ENCODE measurements at regions of chr3 and their contacts with region 1.

Region 1: GRCh38 chr3:122392868-122393844 is 9.2 kb downstream of the FAM162A start:
- DNase-seq: peak; percentile 42
- ATAC-seq: no peak
- H3K4me3 Mint-ChIP-seq: no peak overlapping the region
- H3K27ac Mint-ChIP-seq: no peak overlapping the region
- H3K4me1 Mint-ChIP-seq: peaks cover 28% of the 10 kb centered on the region
- H3K27me3 Mint-ChIP-seq: no peaks in the 10 kb centered on the region

Region 2: GRCh38 chr3:122403489-122403888 is 10.3 kb after region 1 on chr3:
- CTCF ChIA-PET with region 1: interaction called, 23 read pairs
- POLR2A ChIA-PET with region 1: no interaction called
- DNase-seq: no peak
- ATAC-seq: no peak
- H3K4me3 Mint-ChIP-seq: no peak overlapping the region
- H3K27ac Mint-ChIP-seq: no peak overlapping the region
- H3K4me1 Mint-ChIP-seq: no peaks in the 10 kb centered on the region
- H3K27me3 Mint-ChIP-seq: no peaks in the 10 kb centered on the region

Region 3: DNA sequence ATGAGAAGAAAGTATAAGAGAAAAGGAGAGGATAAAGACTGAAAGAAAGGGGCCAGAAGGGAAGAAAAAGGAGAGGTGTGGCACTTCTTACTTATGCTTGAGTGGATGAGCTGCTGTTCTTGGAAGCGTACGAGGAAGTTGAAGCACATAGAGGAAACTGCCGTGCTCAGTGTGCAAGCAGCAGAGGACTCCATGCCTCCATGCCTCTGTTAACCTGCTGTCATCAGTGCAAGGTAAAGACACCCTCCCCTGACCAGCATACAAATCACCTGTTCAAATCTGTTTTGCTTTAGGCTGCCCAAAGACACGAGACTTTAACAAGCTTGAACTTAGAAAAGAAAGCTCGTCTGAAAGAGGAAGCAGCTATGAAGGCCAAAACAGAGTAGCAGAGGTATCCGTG is 16.3 kb after region 1 on chr3:
- CTCF ChIA-PET with region 1: interaction called, 23 read pairs
- POLR2A ChIA-PET with region 1: no interaction called
- DNase-seq: no peak
- ATAC-seq: no peak
- H3K4me3 Mint-ChIP-seq: no peak overlapping the region
- H3K27ac Mint-ChIP-seq: peak overlapping the region; percentile 17
- H3K4me1 Mint-ChIP-seq: peaks cover 24% of the 10 kb centered on the region
- H3K27me3 Mint-ChIP-seq: no peaks in the 10 kb centered on the region

Region 4: DNA sequence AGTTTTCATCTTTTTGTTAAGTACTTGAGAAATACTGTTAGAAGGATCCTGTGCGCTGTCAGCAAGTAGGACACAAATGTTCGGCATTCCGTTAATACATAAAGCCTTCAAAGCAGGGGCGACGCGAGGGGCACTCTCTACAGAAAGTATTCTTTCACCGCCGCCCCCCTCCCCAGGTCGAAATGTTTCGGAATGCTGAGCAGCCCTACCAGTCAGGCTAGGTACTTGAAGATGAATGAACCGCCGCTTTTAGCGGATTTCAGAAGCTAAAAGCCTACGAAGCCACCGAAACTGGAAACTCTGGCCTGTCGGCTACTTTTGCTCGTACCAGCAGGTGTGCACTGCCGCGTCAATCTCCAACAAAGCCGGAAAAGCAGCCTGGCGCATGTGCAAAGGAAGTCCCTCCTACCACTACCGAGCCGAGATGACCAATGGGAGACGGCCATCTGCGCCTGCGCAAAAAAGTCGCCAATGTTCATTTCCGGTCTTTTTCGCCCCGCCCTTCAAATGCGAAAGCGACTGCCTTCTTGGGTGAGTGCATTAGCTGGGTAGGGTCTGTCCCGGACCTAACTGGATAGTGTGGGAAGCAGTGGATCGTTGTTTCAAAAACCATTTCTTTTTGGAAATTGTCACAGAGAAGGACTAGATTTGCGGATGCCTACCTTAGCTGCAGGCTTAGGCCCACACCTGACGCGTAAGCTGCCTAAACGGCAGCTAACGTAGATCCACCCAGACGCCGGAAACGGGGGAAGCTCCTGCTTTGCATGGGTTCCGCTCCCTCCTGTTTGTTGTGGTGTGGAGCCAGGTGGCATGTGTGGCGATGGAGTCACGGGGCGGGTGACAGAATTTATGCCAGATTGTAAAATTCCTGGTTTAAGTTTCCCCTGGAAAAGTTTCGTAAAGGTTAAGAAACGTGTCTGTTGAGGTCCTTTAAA is 22.8 kb after region 1 on chr3 and contains the start of gene WDR5B:
- CTCF ChIA-PET with region 1: interaction called, 23 read pairs
- POLR2A ChIA-PET with region 1: interaction called, 3 read pairs
- DNase-seq: peak; percentile 99
- ATAC-seq: peak; percentile 94
- H3K4me3 Mint-ChIP-seq: peak within 1 kb of the TSS; percentile 96
- H3K27ac Mint-ChIP-seq: peak within 1 kb of the TSS; percentile 99
- H3K4me1 Mint-ChIP-seq: peaks cover 51% of the 10 kb centered on the region
- H3K27me3 Mint-ChIP-seq: no peaks in the 10 kb centered on the region
- total RNA-seq, gene WDR5B: 4.5 to 5.1 TPM

Region 5: GRCh38 chr3:122443090-122443489 is 49.9 kb after region 1 on chr3:
- CTCF ChIA-PET with region 1: no interaction called
- POLR2A ChIA-PET with region 1: no interaction called
- DNase-seq: no peak
- ATAC-seq: no peak
- H3K4me3 Mint-ChIP-seq: no peak overlapping the region
- H3K27ac Mint-ChIP-seq: no peak overlapping the region
- H3K4me1 Mint-ChIP-seq: no peaks in the 10 kb centered on the region
- H3K27me3 Mint-ChIP-seq: no peaks in the 10 kb centered on the region

Measured in activated CD8-positive, alpha-beta T cell treated with anti-CD3 and anti-CD28 coated beads, Interleukin-2, amount 10 ng/mL, durations not matched to agents 7 days and 5 days (primary cell).